Heart right ventricle (tissue), 16 donors: ENCODE measurements at regions of chr20 and their contacts with region 1.

Region 1: GRCh38 chr20:63056236-63056948 is 49.6 kb upstream of the BHLHE23 start:
- DNase-seq: peak in 1 of 2 donors; percentile 11
- ATAC-seq: peak; percentile 18 to 66 (median 56)
- H3K4me3 ChIP-seq: no peak overlapping the region
- H3K27ac ChIP-seq: no peak overlapping the region
- H3K4me1 ChIP-seq: peaks cover 0 to 8% (median 3%) of the 10 kb centered on the region in 9 donors
- H3K27me3 ChIP-seq: peaks cover 8 to 74% (median 66%) of the 10 kb centered on the region in 7 donors
- CTCF ChIP-seq: peak; percentile 81 to 95 (median 91)

Region 2: DNA sequence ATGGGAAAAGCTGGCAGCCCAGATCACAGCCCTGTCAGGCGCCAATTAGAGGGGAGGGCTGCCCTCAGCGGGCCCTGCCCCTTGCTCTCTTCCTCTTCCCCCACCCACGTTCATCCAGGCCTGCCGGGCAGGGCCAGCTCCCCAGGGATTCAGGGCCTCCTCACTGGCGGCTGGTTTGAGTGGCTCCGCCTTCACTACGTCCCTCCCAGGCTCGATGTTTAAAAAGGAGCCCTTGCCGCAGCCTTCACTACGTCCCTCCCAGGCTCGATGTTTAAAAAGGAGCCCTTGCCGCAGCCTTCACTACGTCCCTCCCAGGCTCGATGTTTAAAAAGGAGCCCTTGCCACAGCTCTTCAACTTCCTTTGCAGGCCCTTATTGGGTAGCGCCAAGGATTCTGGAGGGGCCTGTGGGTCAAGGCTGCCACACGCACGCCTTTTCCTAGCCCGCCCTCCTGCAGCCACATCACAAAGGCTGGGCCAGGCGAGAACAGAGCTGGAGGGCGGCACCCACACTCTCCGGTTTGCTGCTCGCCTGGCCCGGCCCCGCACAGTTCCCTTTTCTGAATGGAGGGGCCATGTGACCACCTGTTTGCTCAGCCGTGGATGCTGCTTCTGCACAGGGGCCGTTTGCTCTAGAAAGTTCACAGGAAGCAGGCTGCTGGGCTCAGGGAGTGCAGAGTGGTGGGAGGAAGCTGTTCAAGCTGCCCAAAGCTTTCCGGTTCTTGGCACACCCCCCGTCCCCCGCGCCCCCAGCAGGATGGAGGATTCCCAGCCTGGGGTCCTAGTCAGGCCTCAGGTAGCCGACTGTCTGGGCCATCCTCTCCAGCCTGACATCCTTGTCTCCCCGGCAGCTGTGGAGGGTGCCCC is 102.3 kb before region 1 on chr20:
- intact Hi-C with region 1: no loop called
- DNase-seq: peak; percentile 66 to 76
- ATAC-seq: peak; percentile 50 to 88 (median 73)
- H3K4me3 ChIP-seq: peak overlapping the region in 9 of 10 donors; percentile 0 to 53 (median 32)
- H3K27ac ChIP-seq: peak overlapping the region; percentile 22 to 86 (median 76)
- H3K4me1 ChIP-seq: peaks cover 15 to 39% (median 26%) of the 10 kb centered on the region in 9 donors
- H3K27me3 ChIP-seq: no peaks in the 10 kb centered on the region
- CTCF ChIP-seq: no peak

Region 3: GRCh38 chr20:63151554-63152326 is 95.3 kb after region 1 on chr20:
- intact Hi-C with region 1: no loop called
- DNase-seq: peak; percentile 16 to 36
- ATAC-seq: peak in 4 of 8 donors; percentile 5 to 58 (median 47)
- H3K4me3 ChIP-seq: peak overlapping the region in 3 of 10 donors; percentile 2 to 20 (median 7)
- H3K27ac ChIP-seq: peak overlapping the region in 6 of 10 donors; percentile 7 to 31 (median 19)
- H3K4me1 ChIP-seq: peaks cover 0 to 20% (median 0%) of the 10 kb centered on the region in 9 donors
- H3K27me3 ChIP-seq: peaks cover 7 to 78% (median 76%) of the 10 kb centered on the region in 7 donors
- CTCF ChIP-seq: no peak

Region 4: DNA sequence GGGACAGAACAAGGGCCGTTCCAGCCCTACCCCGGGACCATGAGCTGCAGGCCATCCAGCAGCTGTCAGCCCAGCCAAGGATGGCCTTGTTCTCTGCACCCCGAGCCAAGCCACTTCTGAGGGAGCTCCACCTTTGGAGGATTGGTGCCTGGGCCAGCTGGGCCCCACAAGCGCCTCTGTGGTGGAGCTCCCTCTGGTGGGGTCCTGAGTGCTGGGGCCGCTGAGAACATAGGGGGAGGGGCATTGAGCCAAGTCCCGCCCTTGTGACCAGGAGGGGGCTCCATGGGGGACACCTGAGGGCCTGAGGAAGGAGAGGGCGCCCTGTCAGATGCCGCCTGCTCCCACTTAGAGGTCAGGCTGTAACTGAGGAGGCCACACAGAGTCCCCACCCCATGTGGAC is 116.3 kb after region 1 on chr20:
- intact Hi-C with region 1: loop called in 6 of 10 experiments (anchors 5 kb)
- DNase-seq: no peak
- ATAC-seq: no peak
- H3K4me3 ChIP-seq: no peak overlapping the region
- H3K27ac ChIP-seq: no peak overlapping the region
- H3K4me1 ChIP-seq: peaks cover under 1 to 24% (median 13%) of the 10 kb centered on the region in 9 donors
- H3K27me3 ChIP-seq: peaks cover 39 to 93% (median 63%) of the 10 kb centered on the region in 7 donors
- CTCF ChIP-seq: peak in 1 of 9 donors; percentile 8

Region 5: DNA sequence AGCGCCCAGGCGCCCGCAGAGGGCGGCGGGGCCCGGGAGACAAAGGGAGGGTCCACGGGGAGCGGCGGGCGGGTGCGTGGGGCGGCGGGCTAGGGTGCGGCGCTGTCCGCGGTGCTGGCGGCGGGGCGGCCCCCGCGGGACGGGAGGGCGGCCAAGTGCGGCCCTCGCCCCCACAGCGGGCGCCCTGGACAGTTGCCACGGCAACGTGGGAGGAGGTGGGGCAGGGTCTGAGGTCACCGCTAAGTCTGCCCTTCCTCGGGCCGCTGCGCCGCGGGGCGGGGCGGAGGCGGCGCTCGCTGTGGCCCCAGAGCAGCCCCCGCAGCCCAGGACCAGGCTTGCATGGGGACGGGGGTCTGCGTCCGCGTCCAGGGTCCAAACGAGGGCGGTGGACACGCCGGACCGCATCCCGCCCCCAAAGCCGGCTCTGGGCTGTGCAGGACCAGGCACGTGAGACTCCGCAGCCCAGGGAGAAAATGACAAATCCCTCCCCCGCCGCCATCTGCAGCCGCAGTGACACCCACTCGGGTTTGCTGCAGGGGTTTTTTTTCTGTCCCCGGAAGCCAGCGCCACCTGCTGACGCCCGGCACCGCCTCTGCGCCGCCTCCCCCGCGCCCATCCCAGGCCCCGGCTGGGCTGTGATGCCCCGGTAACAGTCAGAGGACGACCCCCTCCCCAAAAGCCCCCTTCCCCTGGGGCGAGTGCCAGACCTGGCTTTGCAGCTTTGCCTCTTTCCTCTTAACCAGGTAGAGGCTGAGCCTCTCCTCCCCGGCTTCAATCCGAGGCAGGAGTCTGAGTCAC is 122.7 kb after region 1 on chr20:
- intact Hi-C with region 1: loop called (anchors 2 to 5 kb)
- DNase-seq: peak; percentile 20 to 46
- ATAC-seq: peak in 4 of 8 donors; percentile 24 to 45 (median 34)
- H3K4me3 ChIP-seq: peak overlapping the region in 9 of 10 donors; percentile 24 to 47 (median 33)
- H3K27ac ChIP-seq: no peak overlapping the region
- H3K4me1 ChIP-seq: peaks cover 14 to 40% (median 28%) of the 10 kb centered on the region in 9 donors
- H3K27me3 ChIP-seq: peaks cover 60 to 97% (median 91%) of the 10 kb centered on the region in 7 donors
- CTCF ChIP-seq: peak in 8 of 9 donors; percentile 33 to 69 (median 58)

Region 6: GRCh38 chr20:63230800-63231268 is 174.4 kb after region 1 on chr20:
- intact Hi-C with region 1: loop called in 4 of 10 experiments (anchors 2 to 5 kb)
- DNase-seq: peak; percentile 47 to 58
- ATAC-seq: peak; percentile 66 to 90 (median 82)
- H3K4me3 ChIP-seq: no peak overlapping the region
- H3K27ac ChIP-seq: no peak overlapping the region
- H3K4me1 ChIP-seq: peaks cover 0 to 10% (median 4%) of the 10 kb centered on the region in 9 donors
- H3K27me3 ChIP-seq: peaks cover 0 to 62% (median 46%) of the 10 kb centered on the region in 7 donors
- CTCF ChIP-seq: peak; percentile 15 to 66 (median 55)

Region 7: GRCh38 chr20:63381807-63382322 is 325.5 kb after region 1 on chr20:
- intact Hi-C with region 1: loop called in 2 of 10 experiments (anchors 5 to 10 kb)
- DNase-seq: no peak
- ATAC-seq: peak in 7 of 8 donors; percentile 32 to 69 (median 49)
- H3K4me3 ChIP-seq: no peak overlapping the region
- H3K27ac ChIP-seq: no peak overlapping the region
- H3K4me1 ChIP-seq: peaks cover 0 to 3% (median 0%) of the 10 kb centered on the region in 9 donors
- H3K27me3 ChIP-seq: peaks cover 0 to 67% (median 59%) of the 10 kb centered on the region in 7 donors
- CTCF ChIP-seq: peak; percentile 82 to 97 (median 93)

Region 8: DNA sequence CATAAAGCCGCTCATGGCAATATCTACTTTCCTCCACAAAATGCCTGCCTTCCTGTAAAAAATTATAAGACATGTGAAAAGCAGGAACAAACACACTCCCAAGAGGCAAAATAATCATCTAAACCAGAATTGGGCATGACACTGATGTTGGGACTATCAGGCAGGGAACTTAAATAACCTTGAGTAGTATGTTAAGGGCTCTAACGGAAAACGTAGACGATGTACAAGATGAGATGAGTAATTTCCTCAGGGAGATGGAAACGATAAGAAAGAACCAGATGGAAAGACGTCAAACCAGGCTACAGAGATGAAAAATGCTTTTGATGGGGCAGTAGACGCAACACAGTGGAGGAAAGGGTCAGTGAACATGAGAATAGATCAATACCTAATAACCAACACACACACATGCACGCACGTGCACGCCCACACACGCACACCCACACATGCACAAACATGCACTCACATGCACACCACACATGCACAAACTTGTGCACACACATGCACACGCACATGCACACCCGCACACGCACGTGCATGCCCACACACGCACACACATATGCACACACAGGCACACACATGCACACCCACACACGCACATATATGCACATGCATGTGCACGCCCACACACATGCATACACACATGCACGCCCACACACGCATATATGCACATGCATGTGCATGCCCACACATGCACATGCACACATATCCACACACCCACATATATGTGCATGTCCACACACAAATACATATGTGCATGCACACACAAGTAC is 330.8 kb after region 1 on chr20:
- intact Hi-C with region 1: loop called in 2 of 10 experiments (anchors 5 to 10 kb)
- DNase-seq: no peak
- ATAC-seq: no peak
- H3K4me3 ChIP-seq: no peak overlapping the region
- H3K27ac ChIP-seq: no peak overlapping the region
- H3K4me1 ChIP-seq: no peaks in the 10 kb centered on the region
- H3K27me3 ChIP-seq: peaks cover 0 to 36% (median 25%) of the 10 kb centered on the region in 7 donors
- CTCF ChIP-seq: no peak